ENCODE measurements at regions of chr5 and their contacts with region 1.

Region 1: GRCh38 chr5:160508780-160509361 is 87.2 kb downstream of the PTTG1 start:
- DNase-seq: peak; percentile 71
- H3K4me3 ChIP-seq: no peak overlapping the region
- H3K27ac ChIP-seq: no peak overlapping the region
- H3K4me1 ChIP-seq: peaks cover 8% of the 10 kb centered on the region
- H3K27me3 ChIP-seq: no peaks in the 10 kb centered on the region
- CTCF ChIP-seq: peak; percentile 66 to 77

Region 2: GRCh38 chr5:160439205-160439600 is 69.7 kb before region 1 on chr5:
- CTCF ChIA-PET with region 1: interaction called, 8 read pairs
- dilution Hi-C with region 1: no loop called
- in situ Hi-C with region 1: no loop called
- intact Hi-C with region 1: loop called (anchors 1 kb)
- DNase-seq: peak; percentile 70
- H3K4me3 ChIP-seq: peak overlapping the region; percentile 38 to 49 (median 42)
- H3K27ac ChIP-seq: peak overlapping the region; percentile 27
- H3K4me1 ChIP-seq: peaks cover 17% of the 10 kb centered on the region
- H3K27me3 ChIP-seq: no peaks in the 10 kb centered on the region
- CTCF ChIP-seq: peak; percentile 93 to 95

Region 3: GRCh38 chr5:160565376-160565775 is 56.5 kb after region 1 on chr5:
- CTCF ChIA-PET with region 1: no interaction called
- dilution Hi-C with region 1: no loop called
- in situ Hi-C with region 1: no loop called
- intact Hi-C with region 1: no loop called
- DNase-seq: no peak
- H3K4me3 ChIP-seq: no peak overlapping the region
- H3K27ac ChIP-seq: no peak overlapping the region
- H3K4me1 ChIP-seq: no peaks in the 10 kb centered on the region
- H3K27me3 ChIP-seq: no peaks in the 10 kb centered on the region
- CTCF ChIP-seq: no peak

Region 4: GRCh38 chr5:160675988-160676387 is 167.1 kb after region 1 on chr5:
- CTCF ChIA-PET with region 1: no interaction called
- dilution Hi-C with region 1: no loop called
- in situ Hi-C with region 1: no loop called
- intact Hi-C with region 1: loop called (anchors 5 kb)
- DNase-seq: no peak
- H3K4me3 ChIP-seq: no peak overlapping the region
- H3K27ac ChIP-seq: no peak overlapping the region
- H3K4me1 ChIP-seq: no peaks in the 10 kb centered on the region
- H3K27me3 ChIP-seq: no peaks in the 10 kb centered on the region
- CTCF ChIP-seq: no peak

Region 5: GRCh38 chr5:160802592-160802991 is 293.7 kb after region 1 on chr5:
- CTCF ChIA-PET with region 1: no interaction called
- dilution Hi-C with region 1: no loop called
- in situ Hi-C with region 1: loop called in 1 of 2 experiments (anchors 25 kb)
- intact Hi-C with region 1: loop called (anchors 5 kb)
- DNase-seq: no peak
- H3K4me3 ChIP-seq: no peak overlapping the region
- H3K27ac ChIP-seq: no peak overlapping the region
- H3K4me1 ChIP-seq: no peaks in the 10 kb centered on the region
- H3K27me3 ChIP-seq: peaks cover under 1% of the 10 kb centered on the region
- CTCF ChIP-seq: peak in 1 of 2 donors; percentile 42

Region 6: DNA sequence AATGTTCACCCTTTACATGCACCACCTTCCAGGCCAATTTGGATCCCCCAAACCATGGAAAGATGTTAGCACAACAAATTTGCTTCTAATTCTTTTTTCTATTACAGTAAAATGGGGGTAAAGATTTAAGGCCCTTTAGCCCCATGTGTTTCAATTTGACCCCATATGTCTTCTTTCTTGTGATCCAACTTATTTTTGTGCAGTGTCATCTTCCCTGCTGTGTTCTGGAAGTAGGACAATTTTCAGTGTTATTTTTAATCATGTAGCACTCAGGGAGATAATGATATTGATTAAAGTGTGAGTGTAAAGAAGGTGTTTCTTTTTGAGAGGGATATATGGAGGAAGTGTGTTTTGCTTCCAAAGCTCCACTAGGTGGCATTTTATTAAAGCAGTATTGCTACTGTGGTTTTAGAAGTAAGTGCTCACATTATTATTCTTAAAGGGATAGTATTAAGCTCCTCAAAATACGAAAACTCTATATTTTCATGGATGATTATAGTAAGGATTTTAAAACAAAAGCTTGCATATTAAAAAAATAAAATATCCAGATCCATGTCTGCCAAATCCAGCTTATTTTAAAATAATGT is 461.8 kb after region 1 on chr5:
- CTCF ChIA-PET with region 1: no interaction called
- dilution Hi-C with region 1: no loop called
- in situ Hi-C with region 1: no loop called
- intact Hi-C with region 1: loop called (anchors 2 kb)
- DNase-seq: peak; percentile 24
- H3K4me3 ChIP-seq: no peak overlapping the region
- H3K27ac ChIP-seq: no peak overlapping the region
- H3K4me1 ChIP-seq: peaks cover 7% of the 10 kb centered on the region
- H3K27me3 ChIP-seq: no peaks in the 10 kb centered on the region
- CTCF ChIP-seq: peak; percentile 51 to 60

Measured in mammary epithelial cell (primary cell).